ENCODE measurements at regions of chr5 and their contacts with region 1.

Region 1: GRCh38 chr5:179806250-179807222 is at the start of gene MGAT4B:
- DNase-seq: peak; percentile 94
- H3K4me3 ChIP-seq: peak within 1 kb of the TSS; percentile 49 to 93 (median 72)
- H3K27ac ChIP-seq: peak within 1 kb of the TSS; percentile 72 to 96 (median 94)
- H3K4me1 ChIP-seq: peaks cover 28 to 62% (median 54%) of the 10 kb centered on the region in 6 donors
- H3K27me3 ChIP-seq: no peaks in the 10 kb centered on the region
- CTCF ChIP-seq: peak in 1 of 11 experiments; percentile 9
- POLR2A ChIP-seq: no peak
- total RNA-seq, gene MGAT4B: 76.8 to 117 (median 87.7) TPM

Region 2: DNA sequence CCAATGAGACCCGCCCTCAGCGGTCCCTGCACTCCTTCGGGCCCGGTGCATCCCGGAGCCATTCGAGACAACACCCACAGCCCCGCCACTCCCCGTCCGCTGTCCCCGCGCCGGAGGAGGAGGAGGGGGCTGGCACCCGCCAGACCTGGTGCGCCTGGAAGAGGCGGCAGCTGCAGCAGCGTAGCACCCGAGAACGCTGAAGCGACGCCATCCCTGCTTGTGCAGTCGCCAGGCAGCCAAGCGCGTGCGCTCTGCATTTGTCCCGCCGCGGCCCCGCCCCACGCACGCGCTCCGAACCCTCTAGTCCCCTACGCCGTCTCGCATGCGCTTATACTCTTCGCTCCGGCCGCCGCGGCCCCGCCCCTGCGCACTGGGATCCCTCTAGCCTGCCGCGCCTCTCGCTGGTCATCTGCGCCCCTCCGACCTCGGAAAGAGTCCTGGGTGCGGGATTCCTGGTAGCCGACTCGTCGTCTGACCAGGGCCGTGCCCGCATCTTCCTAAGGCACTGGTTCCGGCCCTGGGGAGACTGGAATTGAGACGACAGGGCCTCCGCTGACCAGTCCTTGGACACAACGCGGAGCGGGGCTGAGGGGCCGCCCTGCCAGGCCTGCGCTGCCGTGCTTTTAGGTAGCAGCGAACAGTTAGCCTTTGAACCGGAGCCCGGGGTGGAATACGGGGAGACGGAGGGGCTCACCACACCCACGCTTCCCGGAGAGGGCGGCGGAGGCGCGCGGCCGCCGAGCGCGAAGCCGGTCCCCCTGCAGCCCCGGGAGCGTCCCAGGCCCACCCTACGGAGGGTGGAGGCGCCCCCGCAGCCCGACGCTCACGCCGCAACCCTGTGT is 52.3 kb after region 1 on chr5 and contains the start of gene MRNIP:
- intact Hi-C with region 1: loop called (anchors 10 kb)
- DNase-seq: peak; percentile 100
- H3K4me3 ChIP-seq: peak within 1 kb of the TSS; percentile 88 to 100 (median 99)
- H3K27ac ChIP-seq: peak within 1 kb of the TSS; percentile 71 to 92 (median 88)
- H3K4me1 ChIP-seq: peaks cover 10 to 54% (median 26%) of the 10 kb centered on the region in 6 donors
- H3K27me3 ChIP-seq: no peaks in the 10 kb centered on the region
- CTCF ChIP-seq: peak in 3 of 11 experiments; percentile 9 to 37 (median 17)
- POLR2A ChIP-seq: peak in 1 of 3 donors; percentile 3
- total RNA-seq, gene MRNIP: 46.2 to 88.4 (median 48.0) TPM

Region 3: DNA sequence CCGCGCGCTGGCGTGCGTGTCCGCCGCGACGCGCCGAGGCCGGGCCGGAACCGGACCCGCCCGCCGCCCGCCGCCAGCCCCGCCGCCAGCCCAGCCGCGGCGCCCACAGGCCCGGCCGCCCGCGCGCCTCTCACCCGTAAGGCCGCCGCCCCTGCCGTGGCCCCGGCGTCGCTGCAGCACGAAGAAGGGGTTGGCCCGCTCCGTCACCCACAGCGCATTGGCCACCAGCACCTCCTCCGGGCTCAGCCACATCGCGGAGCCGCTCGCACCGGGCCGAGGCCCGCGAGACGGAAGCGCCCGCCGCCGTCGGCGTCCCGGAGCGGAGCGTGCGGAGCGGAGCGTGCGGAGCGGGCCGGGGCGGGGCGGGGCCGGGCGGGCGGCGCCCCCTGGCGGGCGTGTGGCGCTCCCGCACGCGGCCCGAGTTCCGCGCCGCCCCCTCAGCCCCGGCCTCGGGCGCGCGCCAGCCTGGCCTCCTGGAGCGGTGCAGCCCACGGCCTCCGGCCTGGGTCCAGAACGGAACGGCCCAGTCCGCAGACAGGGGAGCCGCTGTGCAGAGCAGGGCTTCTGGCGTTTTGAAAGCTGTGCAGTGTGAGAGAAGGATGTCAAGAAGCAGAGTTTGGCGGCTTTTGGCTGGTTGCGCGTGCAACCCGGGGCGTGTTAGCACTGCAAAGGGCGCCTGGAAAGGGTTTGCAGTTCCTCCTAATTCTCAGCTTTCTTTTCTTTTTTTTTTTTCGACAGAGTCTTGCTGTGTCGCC is 101.2 kb after region 1 on chr5 and contains the start of gene TBC1D9B:
- intact Hi-C with region 1: loop called (anchors 5 kb)
- DNase-seq: peak; percentile 94
- H3K4me3 ChIP-seq: peak within 1 kb of the TSS; percentile 38 to 82 (median 56)
- H3K27ac ChIP-seq: peak within 1 kb of the TSS; percentile 49 to 89 (median 71)
- H3K4me1 ChIP-seq: peaks cover 11 to 34% (median 26%) of the 10 kb centered on the region in 6 donors
- H3K27me3 ChIP-seq: no peaks in the 10 kb centered on the region
- CTCF ChIP-seq: peak in 10 of 11 experiments; percentile 24 to 76 (median 52)
- POLR2A ChIP-seq: no peak
- total RNA-seq, gene TBC1D9B: 98.9 to 140 (median 120) TPM

Measured in spleen (tissue), 13 donors.